ENCODE measurements at regions of chr1 and their contacts with region 1.

Region 1: GRCh38 chr1:78839704-78840277 is 166.7 kb downstream of the ADGRL4 start:
- DNase-seq: peak; percentile 16
- ATAC-seq: no peak
- H3K4me3 Mint-ChIP-seq: no peak overlapping the region
- H3K27ac Mint-ChIP-seq: no peak overlapping the region
- H3K4me1 Mint-ChIP-seq: peaks cover 9% of the 10 kb centered on the region
- H3K27me3 Mint-ChIP-seq: no peaks in the 10 kb centered on the region
- CTCF ChIP-seq: peak; percentile 38; the same call in 1 of the 2 replicates

Region 2: GRCh38 chr1:78664763-78665162 is 175.0 kb before region 1 on chr1:
- CTCF ChIA-PET with region 1: no interaction called
- POLR2A ChIA-PET with region 1: no interaction called
- DNase-seq: no peak
- ATAC-seq: no peak
- H3K4me3 Mint-ChIP-seq: no peak overlapping the region
- H3K27ac Mint-ChIP-seq: no peak overlapping the region
- H3K4me1 Mint-ChIP-seq: no peaks in the 10 kb centered on the region
- H3K27me3 Mint-ChIP-seq: peaks cover 19% of the 10 kb centered on the region
- CTCF ChIP-seq: no peak

Region 3: DNA sequence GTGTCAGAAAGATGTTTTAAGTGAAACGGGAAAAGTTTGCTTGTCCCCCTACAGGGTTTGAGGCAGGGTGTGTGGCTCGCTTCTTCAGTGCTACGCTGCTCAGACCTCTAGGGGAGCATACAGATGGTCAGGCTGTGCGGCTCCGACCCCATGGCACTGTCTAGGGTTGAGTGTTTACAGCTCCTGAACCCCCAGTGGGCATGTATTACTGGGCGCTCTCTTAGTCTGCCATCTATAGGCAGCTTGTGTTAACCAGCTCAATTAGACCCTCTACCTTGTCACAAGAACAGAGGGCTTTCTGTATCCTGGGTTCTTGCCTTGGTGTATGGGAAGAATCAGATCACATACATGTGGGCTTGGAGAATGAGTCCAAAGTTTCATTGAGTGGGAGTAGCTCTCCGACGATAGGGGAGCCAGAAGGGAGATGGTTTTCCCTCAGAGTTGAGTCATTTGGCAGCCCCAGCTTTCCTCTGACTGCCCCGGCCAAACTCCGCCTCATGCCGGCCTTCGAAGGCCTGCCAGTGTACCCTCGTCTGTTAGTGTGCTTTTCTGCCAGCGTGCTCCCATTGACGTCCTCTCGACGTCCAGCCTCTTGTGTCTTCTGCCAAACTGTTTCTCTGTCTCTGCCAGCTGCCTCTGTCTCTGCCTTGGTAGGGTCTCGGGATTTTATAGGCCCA is 205.3 kb after region 1 on chr1:
- CTCF ChIA-PET with region 1: interaction called, 17 read pairs
- POLR2A ChIA-PET with region 1: no interaction called
- DNase-seq: peak; percentile 46
- ATAC-seq: peak; percentile 98
- H3K4me3 Mint-ChIP-seq: no peak overlapping the region
- H3K27ac Mint-ChIP-seq: no peak overlapping the region
- H3K4me1 Mint-ChIP-seq: peaks cover 13% of the 10 kb centered on the region
- H3K27me3 Mint-ChIP-seq: no peaks in the 10 kb centered on the region
- CTCF ChIP-seq: no peak

Region 4: GRCh38 chr1:79197421-79197820 is 357.6 kb after region 1 on chr1:
- CTCF ChIA-PET with region 1: interaction called, 39 read pairs
- POLR2A ChIA-PET with region 1: no interaction called
- DNase-seq: no peak
- ATAC-seq: peak; percentile 21; the same call in 1 of the 2 replicates
- H3K4me3 Mint-ChIP-seq: no peak overlapping the region
- H3K27ac Mint-ChIP-seq: no peak overlapping the region
- H3K4me1 Mint-ChIP-seq: peaks cover 13% of the 10 kb centered on the region
- H3K27me3 Mint-ChIP-seq: no peaks in the 10 kb centered on the region; the same call in 1 of the 2 replicates
- CTCF ChIP-seq: no peak